ENCODE measurements at regions of chr6 and their contacts with region 1.

Region 1: DNA sequence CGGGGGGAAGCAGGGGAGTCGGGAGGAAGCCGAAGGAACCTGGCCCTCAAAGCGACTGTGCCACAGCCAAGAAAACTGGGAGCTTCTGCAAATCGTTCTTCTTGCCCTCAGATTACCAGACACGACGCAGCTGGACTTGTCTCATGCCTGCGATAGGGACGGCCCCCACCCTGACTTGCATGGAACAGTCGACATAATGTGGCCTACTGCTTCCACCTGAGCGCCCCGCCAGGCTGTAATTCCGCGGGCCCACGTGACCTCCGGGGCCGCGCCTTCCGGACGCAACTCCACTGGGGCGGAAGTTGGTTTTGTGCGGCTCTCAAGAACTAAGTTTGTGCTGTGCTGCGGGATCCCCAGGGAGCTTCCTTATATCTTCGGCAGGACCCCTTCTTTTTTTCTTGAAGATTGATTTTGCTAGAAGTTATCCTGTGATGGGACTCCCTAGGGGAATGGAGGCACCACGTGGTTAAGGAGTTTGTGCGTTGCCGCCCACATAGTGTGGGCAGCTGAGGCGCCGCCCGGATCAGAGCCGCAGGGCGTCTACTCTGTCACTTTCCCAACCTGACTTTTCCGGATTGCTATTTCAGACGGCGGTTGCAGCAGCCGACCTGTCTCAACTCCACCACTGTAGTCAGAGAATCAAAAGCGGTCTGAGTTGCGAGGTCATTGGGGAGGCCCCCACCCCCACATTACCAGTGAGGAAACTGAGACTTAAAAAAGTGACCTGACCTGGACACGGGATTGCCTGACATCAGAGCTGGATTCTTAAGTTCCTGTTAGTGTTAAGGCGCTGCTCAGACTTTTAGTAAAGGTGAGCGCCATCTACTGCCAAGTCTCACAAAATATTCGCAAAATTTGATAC is 540 bp upstream of the CD164 start:
- DNase-seq: peak; percentile 95
- ATAC-seq: peak; percentile 72
- H3K4me3 Mint-ChIP-seq: peak overlapping the region; percentile 94
- H3K27ac Mint-ChIP-seq: peak overlapping the region; percentile 100
- H3K4me1 Mint-ChIP-seq: peaks cover 30% of the 10 kb centered on the region
- H3K27me3 Mint-ChIP-seq: peaks cover 5% of the 10 kb centered on the region

Region 2: GRCh38 chr6:109187399-109188114 is 195.2 kb before region 1 on chr6:
- CTCF ChIA-PET with region 1: interaction called, 111 read pairs
- POLR2A ChIA-PET with region 1: interaction called, 40 read pairs
- DNase-seq: peak; percentile 72
- ATAC-seq: peak; percentile 81
- H3K4me3 Mint-ChIP-seq: no peak overlapping the region
- H3K27ac Mint-ChIP-seq: no peak overlapping the region
- H3K4me1 Mint-ChIP-seq: peaks cover 12% of the 10 kb centered on the region
- H3K27me3 Mint-ChIP-seq: peaks cover 37% of the 10 kb centered on the region

Region 3: GRCh38 chr6:109397020-109397419 is 14.2 kb after region 1 on chr6:
- CTCF ChIA-PET with region 1: interaction called, 39 read pairs
- POLR2A ChIA-PET with region 1: interaction called, 15 read pairs
- DNase-seq: no peak
- ATAC-seq: peak; percentile 33
- H3K4me3 Mint-ChIP-seq: no peak overlapping the region
- H3K27ac Mint-ChIP-seq: no peak overlapping the region
- H3K4me1 Mint-ChIP-seq: peaks cover 5% of the 10 kb centered on the region
- H3K27me3 Mint-ChIP-seq: no peaks in the 10 kb centered on the region

Region 4: GRCh38 chr6:109440331-109441068 is 57.7 kb after region 1 on chr6 and contains the starts of genes PPIL6 and SMPD2:
- CTCF ChIA-PET with region 1: interaction called, 10 read pairs
- POLR2A ChIA-PET with region 1: interaction called, 37 read pairs
- DNase-seq: peak; percentile 82
- ATAC-seq: peak; percentile 88
- H3K4me3 Mint-ChIP-seq: peak within 1 kb of the TSS; percentile 90
- H3K27ac Mint-ChIP-seq: peak within 1 kb of the TSS; percentile 82
- H3K4me1 Mint-ChIP-seq: peaks cover 29% of the 10 kb centered on the region
- H3K27me3 Mint-ChIP-seq: no peaks in the 10 kb centered on the region
- total RNA-seq, gene PPIL6: 0.16 TPM in 1 of 2 experiments, not detected in the other
- total RNA-seq, gene SMPD2: 15.5 to 15.6 TPM

Region 5: DNA sequence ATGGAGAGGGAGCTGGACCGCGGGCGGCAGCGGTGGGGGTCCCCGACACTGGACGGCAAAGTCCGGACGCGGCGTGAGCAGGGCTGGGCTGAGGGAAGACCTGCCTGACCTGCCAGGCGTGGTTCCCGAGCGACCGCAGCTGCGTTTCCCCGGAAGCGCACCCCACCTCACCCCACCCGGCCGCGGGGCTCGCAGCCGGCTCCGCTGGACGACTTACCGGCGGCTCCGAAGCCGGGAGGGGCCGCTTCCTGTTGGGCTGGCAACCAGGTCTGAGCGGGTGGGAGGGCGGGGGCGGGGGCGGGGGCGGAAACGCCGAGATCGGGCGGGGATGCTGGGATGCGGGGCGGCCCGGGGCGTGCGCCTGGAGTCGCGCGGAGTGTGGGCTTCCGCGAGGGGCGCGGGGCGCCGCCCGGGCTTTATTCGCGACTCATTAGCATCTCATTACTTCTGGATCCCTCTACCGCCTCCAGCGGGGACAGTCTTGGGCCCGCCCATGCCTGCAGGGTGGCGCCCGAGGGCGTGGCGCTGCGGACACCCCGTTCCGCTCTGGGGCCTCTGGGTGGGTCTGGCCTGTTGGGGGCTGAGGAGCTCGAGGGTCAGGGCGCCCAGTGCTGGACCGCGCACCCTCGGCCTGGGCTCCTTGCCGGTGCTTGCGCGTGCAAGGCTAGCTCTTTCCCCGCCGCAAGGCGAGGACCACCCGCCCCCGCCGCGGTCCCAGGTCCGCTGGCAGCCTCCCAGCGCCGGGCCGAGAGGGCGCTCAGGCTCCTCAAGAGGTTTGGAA is 72.9 kb after region 1 on chr6 and contains the start of gene MICAL1:
- CTCF ChIA-PET with region 1: interaction called, 10 read pairs
- POLR2A ChIA-PET with region 1: interaction called, 30 read pairs
- DNase-seq: peak; percentile 89
- ATAC-seq: peak; percentile 75
- H3K4me3 Mint-ChIP-seq: peak within 1 kb of the TSS; percentile 97
- H3K27ac Mint-ChIP-seq: peak within 1 kb of the TSS; percentile 99
- H3K4me1 Mint-ChIP-seq: peaks cover 75% of the 10 kb centered on the region
- H3K27me3 Mint-ChIP-seq: no peaks in the 10 kb centered on the region
- total RNA-seq, gene MICAL1: 50.5 to 53.2 TPM

Region 6: GRCh38 chr6:109491207-109491938 is 108.6 kb after region 1 on chr6:
- CTCF ChIA-PET with region 1: interaction called, 8 read pairs
- POLR2A ChIA-PET with region 1: interaction called, 16 read pairs
- DNase-seq: peak; percentile 66
- ATAC-seq: peak; percentile 97
- H3K4me3 Mint-ChIP-seq: peak overlapping the region; percentile 56
- H3K27ac Mint-ChIP-seq: peak overlapping the region; percentile 94
- H3K4me1 Mint-ChIP-seq: peaks cover 32% of the 10 kb centered on the region
- H3K27me3 Mint-ChIP-seq: peaks cover 9% of the 10 kb centered on the region

Measured in activated CD8-positive, alpha-beta T cell treated with anti-CD3 and anti-CD28 coated beads, Interleukin-2, amount 10 ng/mL, durations not matched to agents 7 days and 5 days (primary cell).